ENCODE measurements at regions of chr2 and their contacts with region 1.

Region 1: DNA sequence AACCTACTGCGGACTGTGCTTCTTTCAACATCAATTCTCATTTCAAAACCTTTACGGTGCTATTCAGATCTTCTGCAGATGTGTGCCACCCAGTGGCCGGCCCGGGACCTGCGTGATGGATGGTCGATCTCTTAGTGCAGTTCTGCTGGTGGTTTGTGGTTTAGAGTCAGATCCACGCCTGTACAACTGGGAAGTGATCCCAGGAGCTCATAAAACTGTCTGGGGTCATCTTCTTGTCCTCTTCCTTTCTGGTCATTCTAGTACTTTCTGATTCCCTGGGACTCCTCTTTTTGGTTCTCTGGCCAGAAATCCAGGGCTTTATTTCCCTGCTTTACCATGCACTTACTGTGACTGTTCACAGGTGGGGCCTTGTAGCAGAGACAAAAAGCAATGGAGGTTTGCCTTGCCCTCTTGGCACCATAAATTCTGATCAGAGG is 15.8 kb upstream of the SELENOI start:
- DNase-seq: peak; percentile 70
- H3K4me3 Mint-ChIP-seq: no peak overlapping the region
- H3K27ac Mint-ChIP-seq: no peak overlapping the region
- H3K4me1 Mint-ChIP-seq: peaks cover 13% of the 10 kb centered on the region
- H3K27me3 Mint-ChIP-seq: no peaks in the 10 kb centered on the region

Region 2: GRCh38 chr2:25991965-25992364 is 338.2 kb before region 1 on chr2:
- intact Hi-C with region 1: loop called (anchors 5 kb)
- DNase-seq: no peak
- H3K4me3 Mint-ChIP-seq: no peak overlapping the region
- H3K27ac Mint-ChIP-seq: no peak overlapping the region
- H3K4me1 Mint-ChIP-seq: peaks cover 22% of the 10 kb centered on the region
- H3K27me3 Mint-ChIP-seq: peaks cover 9% of the 10 kb centered on the region

Region 3: DNA sequence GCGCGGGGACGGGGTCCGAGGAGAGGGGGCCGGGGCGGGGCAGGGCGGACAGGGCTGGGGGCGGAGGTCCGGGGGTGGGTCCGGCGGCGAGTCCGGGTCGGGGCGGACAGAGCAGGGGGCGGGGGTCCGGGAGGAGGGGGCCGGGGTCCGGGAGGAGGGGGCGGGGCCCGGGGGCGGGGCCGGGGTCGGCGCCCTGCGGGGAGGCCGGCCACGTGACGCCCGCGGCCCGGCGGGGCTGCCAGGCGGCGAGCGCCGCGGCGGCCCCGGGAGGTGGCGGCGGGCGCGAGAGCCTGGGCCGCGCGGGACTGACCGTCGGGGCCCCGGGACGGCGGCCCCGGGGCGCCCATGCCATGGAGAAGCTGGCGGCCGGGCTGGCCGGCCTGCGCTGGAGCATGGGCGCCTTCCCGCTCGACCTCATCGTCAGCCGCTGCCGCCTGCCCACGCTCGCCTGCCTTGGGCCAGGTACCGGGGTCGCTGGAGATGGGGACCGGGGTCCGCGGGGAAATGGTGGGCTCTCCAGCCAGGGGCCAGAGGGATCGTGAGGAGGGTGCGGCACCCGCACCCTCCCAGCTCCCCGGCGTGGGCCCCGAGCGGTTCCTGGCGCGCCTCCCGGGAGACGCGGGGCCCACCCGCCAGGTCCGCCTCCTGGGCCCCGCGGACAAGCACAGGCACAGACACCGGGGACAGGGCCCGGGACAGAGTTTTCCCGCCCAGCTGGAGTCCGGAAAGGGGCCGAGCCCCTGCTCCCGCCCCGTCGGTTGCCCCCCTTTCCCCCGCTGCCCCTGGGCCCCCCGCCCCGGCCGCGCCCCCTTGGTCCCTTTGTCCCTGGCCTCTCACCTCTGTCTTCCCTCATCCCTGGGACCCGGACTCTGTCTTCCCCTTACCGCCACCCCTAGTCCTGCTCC is 157.0 kb before region 1 on chr2 and contains the start of gene GAREM2:
- intact Hi-C with region 1: loop called (anchors 5 kb)
- DNase-seq: no peak
- H3K4me3 Mint-ChIP-seq: peak within 1 kb of the TSS; percentile 85
- H3K27ac Mint-ChIP-seq: peak within 1 kb of the TSS; percentile 68
- H3K4me1 Mint-ChIP-seq: peaks cover 17% of the 10 kb centered on the region
- H3K27me3 Mint-ChIP-seq: peaks cover 45% of the 10 kb centered on the region
- total RNA-seq, gene GAREM2: 6.1 and 7.4 TPM in 2 replicates

Region 4: GRCh38 chr2:26184555-26185303 is 145.4 kb before region 1 on chr2:
- intact Hi-C with region 1: loop called (anchors 1 kb)
- DNase-seq: peak; percentile 86
- H3K4me3 Mint-ChIP-seq: peak overlapping the region; percentile 81
- H3K27ac Mint-ChIP-seq: no peak overlapping the region
- H3K4me1 Mint-ChIP-seq: peaks cover 12% of the 10 kb centered on the region
- H3K27me3 Mint-ChIP-seq: peaks cover 22% of the 10 kb centered on the region

Region 5: DNA sequence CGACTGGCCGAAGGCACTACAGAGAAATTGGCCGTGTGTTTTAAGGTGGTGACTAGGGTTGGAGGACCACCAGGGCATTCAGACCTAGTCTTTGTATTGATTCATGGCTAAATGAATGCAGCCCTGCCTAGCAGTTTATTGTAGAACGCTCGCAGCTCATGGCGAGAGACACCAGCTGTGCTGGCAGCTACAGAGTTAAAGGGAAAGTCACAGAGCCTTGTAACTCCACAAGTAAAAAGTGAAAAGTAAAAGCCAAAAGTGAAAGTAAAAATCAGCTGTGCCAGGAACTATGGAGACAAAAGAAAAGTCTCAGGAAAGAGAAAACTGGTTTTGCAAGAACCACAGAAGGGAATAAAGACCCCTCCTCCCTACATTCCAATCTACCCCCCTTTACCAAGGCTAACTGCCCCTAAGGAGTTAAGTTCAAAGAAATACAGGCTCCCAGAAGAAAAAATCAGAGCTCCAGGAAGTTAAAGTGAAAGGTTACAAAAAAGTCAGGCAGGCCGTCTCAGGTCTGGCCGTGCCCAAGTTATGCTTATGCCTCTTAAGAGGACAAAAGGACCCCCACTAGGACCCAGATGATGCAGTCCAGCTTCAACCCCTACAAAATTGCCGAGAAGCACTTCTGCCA is 30.5 kb before region 1 on chr2:
- intact Hi-C with region 1: loop called (anchors 2 kb)
- DNase-seq: no peak
- H3K4me3 Mint-ChIP-seq: no peak overlapping the region
- H3K27ac Mint-ChIP-seq: no peak overlapping the region
- H3K4me1 Mint-ChIP-seq: no peaks in the 10 kb centered on the region
- H3K27me3 Mint-ChIP-seq: peaks cover 40% of the 10 kb centered on the region

Region 6: DNA sequence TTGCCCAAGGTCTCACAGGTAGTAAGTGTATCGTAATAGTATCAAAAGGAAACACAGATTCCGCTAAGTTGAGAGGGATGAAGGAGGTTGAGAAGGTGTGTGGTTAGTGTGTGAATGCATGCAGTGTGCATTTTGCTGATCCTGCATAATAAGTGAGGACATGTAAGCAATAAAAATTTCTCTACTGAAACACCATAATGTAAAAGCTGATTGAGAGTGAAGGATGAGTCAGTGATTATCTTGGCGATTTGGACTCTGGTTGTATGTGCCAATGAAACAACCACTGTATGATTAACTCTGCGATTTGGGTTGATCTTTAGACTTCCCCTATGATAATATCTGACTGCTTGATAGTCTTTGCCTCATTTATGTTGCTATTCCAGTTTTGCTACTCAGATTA is 33.2 kb after region 1 on chr2:
- intact Hi-C with region 1: no loop called
- DNase-seq: no peak
- H3K4me3 Mint-ChIP-seq: no peak overlapping the region
- H3K27ac Mint-ChIP-seq: no peak overlapping the region
- H3K4me1 Mint-ChIP-seq: peaks cover 28% of the 10 kb centered on the region
- H3K27me3 Mint-ChIP-seq: no peaks in the 10 kb centered on the region

Region 7: GRCh38 chr2:26469092-26469710 is 139.1 kb after region 1 on chr2:
- intact Hi-C with region 1: loop called (anchors 2 kb)
- DNase-seq: peak; percentile 37
- H3K4me3 Mint-ChIP-seq: no peak overlapping the region
- H3K27ac Mint-ChIP-seq: no peak overlapping the region
- H3K4me1 Mint-ChIP-seq: no peaks in the 10 kb centered on the region
- H3K27me3 Mint-ChIP-seq: no peaks in the 10 kb centered on the region

Region 8: DNA sequence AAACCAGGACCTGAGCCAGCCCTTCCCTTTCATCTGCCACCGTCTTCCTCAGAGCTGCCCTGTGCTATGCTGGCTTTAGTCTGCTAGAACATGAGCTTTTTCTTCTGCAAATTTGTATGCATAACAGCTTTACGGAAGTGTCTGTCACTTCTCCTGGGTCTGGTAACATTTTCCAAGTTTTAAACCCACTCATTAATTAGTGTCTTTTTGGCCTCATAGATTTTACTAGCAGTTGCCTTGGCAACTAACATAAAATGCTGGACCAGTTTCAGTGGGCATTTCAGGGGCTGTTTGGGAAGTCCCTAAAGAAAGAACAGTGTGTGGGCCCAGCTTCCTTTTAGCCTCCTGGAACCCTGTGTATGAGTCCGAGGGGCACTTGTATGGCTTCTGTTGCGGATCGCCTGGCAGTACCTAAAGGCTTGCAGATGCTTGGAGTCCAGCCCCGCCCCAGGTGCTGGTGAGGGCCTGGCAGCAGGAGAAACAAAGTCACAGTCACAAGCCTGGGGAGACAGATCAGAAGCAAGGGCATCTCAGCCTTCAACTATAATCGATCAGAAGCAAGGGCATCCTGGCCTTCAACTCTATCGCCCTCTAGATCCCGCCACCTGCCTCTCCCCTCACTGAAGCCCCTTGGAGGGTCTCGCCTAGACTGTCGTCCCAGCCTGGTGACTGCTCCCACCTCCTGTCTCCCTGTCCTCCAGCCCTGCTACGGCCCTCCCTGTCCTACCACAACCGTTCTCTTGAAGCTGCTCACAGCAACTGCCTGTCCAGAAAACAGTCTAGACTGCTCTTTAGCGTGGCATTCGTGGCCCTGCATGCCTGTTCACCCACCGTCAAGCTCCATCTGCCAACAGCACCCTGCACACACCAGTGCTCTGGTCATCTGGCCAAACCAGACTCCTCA is 603.6 kb after region 1 on chr2:
- intact Hi-C with region 1: no loop called
- DNase-seq: no peak
- H3K4me3 Mint-ChIP-seq: no peak overlapping the region
- H3K27ac Mint-ChIP-seq: no peak overlapping the region
- H3K4me1 Mint-ChIP-seq: no peaks in the 10 kb centered on the region
- H3K27me3 Mint-ChIP-seq: no peaks in the 10 kb centered on the region